ENCODE measurements at regions of chr4 and their contacts with region 1.

Region 1: GRCh38 chr4:140153718-140154571 is at the start of gene MAML3:
- DNase-seq: peak; percentile 88
- H3K4me3 Mint-ChIP-seq: peak within 1 kb of the TSS; percentile 78
- H3K27ac Mint-ChIP-seq: no peak within 1 kb of the TSS
- H3K4me1 Mint-ChIP-seq: peaks cover 45% of the 10 kb centered on the region
- H3K27me3 Mint-ChIP-seq: peaks cover 20% of the 10 kb centered on the region
- total RNA-seq, gene MAML3: 0.51 to 0.76 TPM

Region 2: DNA sequence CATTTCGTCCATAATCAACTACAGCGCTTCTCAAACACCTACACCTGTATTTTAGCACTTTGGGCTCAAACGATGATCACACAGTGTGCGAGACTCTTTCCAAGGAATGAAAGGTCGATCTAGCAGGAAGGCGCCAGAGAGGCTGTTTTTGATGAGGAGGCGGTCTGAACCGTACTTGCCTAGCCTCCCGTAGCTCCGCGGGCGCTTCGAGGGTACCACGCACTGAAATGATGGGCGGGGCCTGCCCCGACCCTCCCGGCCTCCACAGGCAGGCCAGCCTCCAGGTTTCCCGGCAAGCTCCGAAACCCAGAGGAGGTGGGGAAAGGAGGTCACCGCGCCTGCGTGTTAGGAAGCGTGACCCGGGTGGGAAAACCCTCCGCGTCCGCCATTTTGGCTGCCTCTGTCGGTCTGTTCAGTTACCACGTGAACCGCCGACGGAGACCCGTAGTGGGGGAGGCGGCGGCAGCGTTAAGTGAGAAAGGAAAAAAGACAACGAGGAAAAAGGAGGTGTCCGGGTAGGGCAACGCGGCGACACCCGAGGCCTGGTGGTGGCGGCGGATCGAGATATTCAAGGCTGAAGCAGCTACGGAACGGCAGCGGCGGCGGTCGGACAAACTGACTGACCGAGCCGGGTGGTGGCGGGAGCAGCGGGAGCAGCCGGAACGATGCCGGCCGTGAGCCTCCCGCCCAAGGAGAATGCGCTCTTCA is 852.7 kb before region 1 on chr4 and contains the start of gene NAA15:
- CTCF ChIA-PET with region 1: no interaction called
- POLR2A ChIA-PET with region 1: no interaction called
- intact Hi-C with region 1: loop called (anchors 5 kb)
- DNase-seq: peak; percentile 99
- H3K4me3 Mint-ChIP-seq: peak within 1 kb of the TSS; percentile 100
- H3K27ac Mint-ChIP-seq: peak within 1 kb of the TSS; percentile 100
- H3K4me1 Mint-ChIP-seq: peaks cover 51% of the 10 kb centered on the region
- H3K27me3 Mint-ChIP-seq: no peaks in the 10 kb centered on the region
- total RNA-seq, gene NAA15: 91.2 to 95.8 TPM

Region 3: DNA sequence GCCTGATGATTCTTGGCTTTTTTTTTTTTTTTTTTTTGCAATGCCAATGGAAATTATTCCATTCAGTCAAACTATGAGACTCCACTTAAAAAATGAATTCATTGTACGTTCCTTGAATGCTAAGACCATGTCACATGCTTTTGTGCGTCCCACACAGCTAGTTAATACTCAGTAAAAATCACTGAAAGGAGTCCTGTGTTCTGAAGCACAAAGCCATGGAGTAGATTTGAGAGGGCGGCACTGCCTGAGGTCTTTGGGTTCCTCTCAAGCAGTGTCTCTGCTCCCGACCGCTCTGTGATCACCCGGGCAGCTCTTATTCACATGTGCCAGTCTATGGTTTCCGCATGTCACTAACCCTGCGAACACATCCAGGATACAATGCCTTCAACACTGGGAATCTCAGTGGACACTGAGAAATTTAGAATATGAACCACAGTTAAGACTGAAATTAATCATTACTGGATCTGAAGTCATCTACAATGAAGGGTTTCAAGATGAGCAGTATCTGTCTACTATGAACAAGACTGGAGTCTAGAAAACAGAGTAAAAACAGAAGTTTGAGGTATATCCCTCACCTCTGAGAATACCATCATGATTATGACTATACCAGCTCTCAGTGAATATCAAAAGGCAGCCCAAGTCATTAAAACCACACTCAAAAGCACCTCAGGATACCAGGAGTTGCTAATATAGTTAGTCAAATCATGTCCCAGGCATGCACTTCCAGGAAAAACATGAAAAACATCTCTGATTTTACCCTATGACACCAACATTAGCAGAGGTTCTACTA is 295.3 kb before region 1 on chr4:
- CTCF ChIA-PET with region 1: no interaction called
- POLR2A ChIA-PET with region 1: no interaction called
- intact Hi-C with region 1: loop called (anchors 1 kb)
- DNase-seq: peak; percentile 39
- H3K4me3 Mint-ChIP-seq: no peak overlapping the region
- H3K27ac Mint-ChIP-seq: peak overlapping the region; percentile 38
- H3K4me1 Mint-ChIP-seq: peaks cover 26% of the 10 kb centered on the region
- H3K27me3 Mint-ChIP-seq: peaks cover 23% of the 10 kb centered on the region

Region 4: GRCh38 chr4:140095694-140096482 is 58.1 kb before region 1 on chr4:
- CTCF ChIA-PET with region 1: interaction called, 6 read pairs
- POLR2A ChIA-PET with region 1: interaction called, 5 read pairs
- intact Hi-C with region 1: loop called (anchors 1 kb)
- DNase-seq: peak; percentile 75
- H3K4me3 Mint-ChIP-seq: peak overlapping the region; percentile 75
- H3K27ac Mint-ChIP-seq: peak overlapping the region; percentile 98
- H3K4me1 Mint-ChIP-seq: peaks cover 71% of the 10 kb centered on the region
- H3K27me3 Mint-ChIP-seq: no peaks in the 10 kb centered on the region

Region 5: DNA sequence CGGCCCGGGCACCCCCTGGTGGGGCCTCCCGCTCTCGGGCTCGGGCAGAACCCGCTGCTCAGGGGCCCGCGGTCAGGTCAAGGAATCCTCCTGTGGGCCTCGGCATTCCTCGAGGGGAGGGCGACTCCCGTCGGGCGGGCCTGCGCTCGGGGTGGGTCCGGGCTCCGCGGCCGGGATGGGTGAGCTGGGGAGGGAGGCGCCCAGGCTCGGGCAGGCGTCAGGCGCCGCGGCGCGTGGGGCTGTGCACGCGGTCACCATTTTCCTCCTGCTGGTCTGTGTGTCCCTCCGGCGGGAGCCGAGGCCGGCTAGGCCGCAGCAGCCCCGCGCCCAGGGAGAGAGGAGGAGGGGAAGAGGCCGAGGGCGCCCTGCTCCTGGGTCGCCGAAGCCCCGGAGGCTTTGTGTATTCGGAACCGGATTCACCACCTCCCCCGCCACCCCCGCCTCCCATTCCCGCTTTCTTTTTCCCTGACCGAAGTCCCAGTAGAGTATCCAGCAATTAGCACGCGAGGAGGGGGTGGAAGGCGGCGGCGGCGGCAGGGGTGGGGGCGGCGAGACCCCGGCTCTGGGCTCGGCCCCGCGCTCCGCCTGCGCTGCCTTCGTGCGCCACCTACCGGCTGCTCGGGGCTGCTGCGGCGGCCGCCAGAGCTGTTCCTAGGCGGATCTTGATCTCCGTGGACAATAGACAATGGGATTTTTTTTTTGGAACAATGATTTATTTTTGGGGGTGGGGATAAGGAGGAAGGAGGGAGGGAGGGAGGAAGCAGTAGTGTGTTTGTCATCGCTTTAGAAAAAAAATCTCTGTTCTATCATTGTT is 99.0 kb after region 1 on chr4:
- CTCF ChIA-PET with region 1: interaction called, 5 read pairs
- POLR2A ChIA-PET with region 1: no interaction called
- intact Hi-C with region 1: loop called (anchors 1 kb)
- DNase-seq: peak; percentile 63
- H3K4me3 Mint-ChIP-seq: peak overlapping the region; percentile 55
- H3K27ac Mint-ChIP-seq: no peak overlapping the region
- H3K4me1 Mint-ChIP-seq: peaks cover 17% of the 10 kb centered on the region
- H3K27me3 Mint-ChIP-seq: peaks cover 20% of the 10 kb centered on the region

Measured in activated CD4-positive, alpha-beta memory T cell treated with anti-CD3 and anti-CD28 coated beads for 36 hours (primary cell).